PC-9 (cell line): ENCODE measurements at regions of chr5 and their contacts with region 1.

Region 1: GRCh38 chr5:177599731-177600507 is at the start of gene B4GALT7:
- DNase-seq: peak in 1 of 2 experiments; percentile 90
- H3K4me3 ChIP-seq: peak within 1 kb of the TSS; percentile 61
- H3K27ac ChIP-seq: peak within 1 kb of the TSS; percentile 41
- H3K4me1 ChIP-seq: peaks cover 13% of the 10 kb centered on the region
- H3K27me3 ChIP-seq: no peaks in the 10 kb centered on the region
- CTCF ChIP-seq: no peak
- total RNA-seq, gene B4GALT7: 27.9 and 29.5 TPM in 2 replicates

Region 2: DNA sequence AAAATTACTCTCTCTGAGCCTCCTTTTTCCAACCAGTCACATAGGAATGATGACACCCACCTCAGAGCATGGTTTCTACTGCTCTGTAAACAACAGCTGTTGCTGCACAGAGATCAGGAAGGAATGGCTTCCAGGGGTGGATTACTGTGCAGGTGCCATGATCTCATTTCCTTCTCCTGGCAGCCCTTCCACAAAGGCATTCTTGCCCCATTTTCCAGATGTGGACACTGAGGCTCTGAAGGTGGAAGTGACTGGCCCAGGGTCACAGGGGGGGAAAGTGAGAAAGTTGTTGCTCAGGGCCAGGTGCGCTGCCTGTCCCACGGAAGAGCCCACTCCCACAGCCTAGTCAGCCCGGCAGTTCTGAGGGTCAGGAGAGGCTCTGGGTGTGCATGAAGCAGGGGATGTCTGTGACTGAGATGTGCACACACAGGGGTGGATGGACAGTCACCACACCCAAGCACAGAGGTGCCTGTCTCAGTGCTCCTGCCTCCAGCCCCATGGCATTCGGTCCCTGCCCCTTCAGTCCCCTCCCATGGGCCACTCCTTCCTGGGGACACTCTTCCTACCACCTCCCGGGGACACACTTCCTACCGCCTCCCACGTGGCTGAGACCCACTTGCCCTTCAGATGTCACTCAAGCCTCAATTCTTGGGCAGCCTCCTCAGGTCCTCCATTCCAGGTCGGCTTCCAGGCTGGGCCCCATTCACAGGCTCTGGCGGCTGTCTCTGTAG is 496.2 kb before region 1 on chr5:
- CTCF ChIA-PET with region 1: no interaction called
- POLR2A ChIA-PET with region 1: no interaction called
- intact Hi-C with region 1: no loop called
- DNase-seq: no peak
- H3K4me3 ChIP-seq: no peak overlapping the region
- H3K27ac ChIP-seq: no peak overlapping the region
- H3K4me1 ChIP-seq: no peaks in the 10 kb centered on the region
- H3K27me3 ChIP-seq: no peaks in the 10 kb centered on the region
- CTCF ChIP-seq: no peak

Region 3: DNA sequence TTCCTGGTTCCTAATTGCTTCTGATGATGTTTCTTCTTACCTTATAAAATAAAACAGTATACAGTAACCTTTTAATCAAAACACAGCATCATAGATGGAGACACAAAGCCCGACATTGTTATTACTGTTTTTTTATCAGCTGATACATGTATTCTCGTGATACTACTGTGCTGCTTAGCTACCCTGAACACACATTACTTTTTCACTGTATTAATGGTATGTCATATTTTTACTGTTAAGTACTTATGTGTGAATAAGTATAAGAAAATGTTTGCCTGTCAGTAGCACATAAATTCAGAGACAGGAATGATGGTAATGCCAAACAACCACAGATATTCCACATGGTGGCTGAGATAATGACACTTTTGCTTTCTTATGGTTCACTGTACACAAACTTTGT is 365.1 kb before region 1 on chr5:
- CTCF ChIA-PET with region 1: no interaction called
- POLR2A ChIA-PET with region 1: interaction called, 11 read pairs
- intact Hi-C with region 1: no loop called
- DNase-seq: no peak
- H3K4me3 ChIP-seq: no peak overlapping the region
- H3K27ac ChIP-seq: no peak overlapping the region
- H3K4me1 ChIP-seq: no peaks in the 10 kb centered on the region
- H3K27me3 ChIP-seq: no peaks in the 10 kb centered on the region
- CTCF ChIP-seq: no peak

Region 4: GRCh38 chr5:178069909-178070308 is 470.0 kb after region 1 on chr5:
- CTCF ChIA-PET with region 1: no interaction called
- POLR2A ChIA-PET with region 1: no interaction called
- intact Hi-C with region 1: loop called (anchors 10 kb)
- DNase-seq: peak in 1 of 2 experiments; percentile 43
- H3K4me3 ChIP-seq: no peak overlapping the region
- H3K27ac ChIP-seq: no peak overlapping the region
- H3K4me1 ChIP-seq: no peaks in the 10 kb centered on the region
- H3K27me3 ChIP-seq: peaks cover 45% of the 10 kb centered on the region
- CTCF ChIP-seq: peak; percentile 26; the same call in 1 of the 2 replicates

Region 5: DNA sequence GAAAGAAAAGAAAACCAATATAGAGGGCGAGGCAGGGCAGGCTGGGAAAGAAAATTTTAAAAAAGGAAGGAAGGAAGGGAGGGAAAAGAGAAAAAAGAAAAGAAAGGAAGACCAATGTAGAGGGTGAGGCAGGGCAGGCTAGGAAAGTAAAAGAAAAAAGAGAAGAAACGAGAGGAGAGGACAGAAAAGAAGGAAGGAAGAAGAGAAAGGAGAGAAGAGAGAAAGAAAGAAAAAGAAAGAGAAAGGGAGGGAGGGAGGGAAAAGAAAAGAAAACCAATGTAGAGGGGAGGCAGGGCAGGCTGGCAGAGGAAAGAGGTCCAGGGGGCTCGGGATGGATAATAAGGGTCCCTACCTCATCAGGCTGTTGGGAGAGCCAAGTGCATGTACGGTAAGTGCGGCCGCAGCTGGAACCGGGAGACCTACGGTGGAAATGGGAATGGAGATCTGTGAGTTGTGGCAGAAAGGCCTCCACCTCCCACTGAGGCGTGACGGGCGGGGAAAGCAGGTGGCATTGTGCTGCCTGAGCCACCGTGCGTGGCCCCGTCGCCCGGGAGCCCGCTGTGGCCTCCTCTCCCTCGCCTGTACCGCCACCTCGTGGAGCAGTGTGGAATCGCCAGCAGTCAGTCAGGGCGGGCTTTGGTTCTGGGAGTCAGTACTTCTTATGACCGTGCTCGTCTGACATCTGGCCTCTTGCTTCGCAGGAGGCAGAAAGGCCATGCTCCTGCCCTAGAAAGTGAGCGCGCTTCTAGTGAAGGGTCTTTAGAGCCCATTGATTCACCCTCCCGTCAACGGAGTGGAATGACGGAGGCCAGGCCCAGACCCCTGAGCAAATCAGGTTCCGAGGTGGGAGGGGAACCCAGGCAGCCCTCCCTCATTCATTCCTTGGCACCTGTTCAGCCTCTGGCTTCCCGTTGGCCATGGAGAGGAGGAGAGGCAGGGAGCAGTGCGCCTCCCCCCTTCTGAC is 564.1 kb after region 1 on chr5:
- CTCF ChIA-PET with region 1: no interaction called
- POLR2A ChIA-PET with region 1: no interaction called
- intact Hi-C with region 1: loop called (anchors 10 kb)
- DNase-seq: peak; percentile 70 to 89
- H3K4me3 ChIP-seq: no peak overlapping the region
- H3K27ac ChIP-seq: no peak overlapping the region
- H3K4me1 ChIP-seq: no peaks in the 10 kb centered on the region
- H3K27me3 ChIP-seq: no peaks in the 10 kb centered on the region; the same call in 1 of the 2 replicates
- CTCF ChIP-seq: peak; percentile 96